BJ (cell line): ENCODE measurements at regions of chr2 and their contacts with region 1.

Region 1: GRCh38 chr2:9972621-9973479 is 21.4 kb downstream of the GRHL1 start:
- DNase-seq: no peak
- H3K4me3 ChIP-seq: no peak overlapping the region
- H3K27me3 ChIP-seq: no peaks in the 10 kb centered on the region
- CTCF ChIP-seq: no peak

Region 2: DNA sequence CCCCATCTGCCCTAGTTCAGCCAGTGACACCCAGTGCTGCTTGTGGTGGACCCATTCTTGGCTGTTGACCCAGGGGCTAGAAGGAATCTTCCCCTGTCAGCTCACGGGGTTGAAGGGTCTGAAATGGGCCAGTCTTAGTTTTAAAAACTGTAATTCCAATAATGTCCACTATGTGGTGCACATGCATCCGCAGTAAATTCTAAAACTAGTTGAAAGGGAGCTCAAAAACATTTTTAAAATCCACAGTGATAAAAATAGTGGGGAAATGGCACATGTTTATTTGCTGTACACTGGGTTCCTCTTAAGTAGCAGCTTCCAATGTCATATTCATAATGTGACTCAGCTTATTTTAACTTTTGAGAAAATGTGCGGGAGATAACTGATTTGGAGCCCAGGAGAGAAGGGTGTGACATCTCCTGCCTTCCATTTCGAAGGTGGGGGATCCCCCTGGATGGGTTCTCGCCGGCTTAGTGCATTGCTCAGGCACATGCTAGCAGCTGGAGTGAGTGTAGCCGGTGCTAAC is 11.4 kb after region 1 on chr2:
- CTCF ChIA-PET with region 1: interaction called, 13 read pairs
- POLR2A ChIA-PET with region 1: no interaction called
- DNase-seq: no peak
- H3K4me3 ChIP-seq: no peak overlapping the region
- H3K27me3 ChIP-seq: no peaks in the 10 kb centered on the region
- CTCF ChIP-seq: peak; percentile 64

Region 3: DNA sequence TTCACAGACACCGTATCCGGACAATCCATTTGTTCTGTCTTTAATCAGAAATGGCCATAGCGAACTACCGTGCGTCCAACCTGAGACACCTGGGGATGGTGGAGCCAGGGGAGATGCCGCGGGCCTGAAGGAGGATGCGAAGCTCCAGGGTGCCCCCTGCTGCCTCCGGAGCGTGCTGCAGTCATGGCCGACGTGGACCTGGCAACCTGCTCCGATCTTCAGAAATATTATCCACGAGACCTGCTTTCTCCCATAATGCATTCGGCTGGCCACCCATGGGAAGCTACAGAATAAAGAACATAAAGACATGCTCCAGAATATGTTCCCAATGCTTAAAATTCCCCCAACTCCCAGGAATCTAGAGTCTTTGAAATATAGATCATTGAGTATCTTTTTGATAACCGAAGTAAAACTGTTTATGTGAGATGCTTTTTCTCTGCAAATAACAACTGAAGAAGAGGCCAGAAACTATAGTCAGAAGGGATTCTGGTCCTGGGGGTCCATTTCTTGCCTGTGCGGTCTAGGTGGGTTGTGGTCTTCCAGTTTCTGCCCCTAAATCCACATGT is 1151.7 kb after region 1 on chr2:
- CTCF ChIA-PET with region 1: no interaction called
- POLR2A ChIA-PET with region 1: no interaction called
- DNase-seq: no peak
- H3K4me3 ChIP-seq: no peak overlapping the region
- H3K27me3 ChIP-seq: no peaks in the 10 kb centered on the region; the same call in 1 of the 2 replicates
- CTCF ChIP-seq: peak; percentile 97